PC-9 (cell line): ENCODE measurements at regions of chr16 and their contacts with region 1.

Region 1: GRCh38 chr16:22386976-22387375 is 12.6 kb upstream of the CDR2 start:
- DNase-seq: peak; percentile 25 to 92
- H3K4me3 ChIP-seq: no peak overlapping the region
- H3K27ac ChIP-seq: peak overlapping the region; percentile 64
- H3K4me1 ChIP-seq: peaks cover 41% of the 10 kb centered on the region
- H3K27me3 ChIP-seq: no peaks in the 10 kb centered on the region
- CTCF ChIP-seq: no peak

Region 2: GRCh38 chr16:22374311-22375116 is 12.5 kb before region 1 on chr16 and contains the start of gene CDR2:
- CTCF ChIA-PET with region 1: no interaction called
- POLR2A ChIA-PET with region 1: interaction called, 15 read pairs
- intact Hi-C with region 1: no loop called
- DNase-seq: peak; percentile 91 to 99
- H3K4me3 ChIP-seq: peak within 1 kb of the TSS; percentile 95
- H3K27ac ChIP-seq: peak within 1 kb of the TSS; percentile 45; the same call in 1 of the 2 replicates
- H3K4me1 ChIP-seq: peaks cover 39% of the 10 kb centered on the region
- H3K27me3 ChIP-seq: no peaks in the 10 kb centered on the region
- CTCF ChIP-seq: no peak
- total RNA-seq, gene CDR2: 29.3 and 34.0 TPM in 2 replicates

Region 3: GRCh38 chr16:22417019-22417418 is 30.0 kb after region 1 on chr16:
- CTCF ChIA-PET with region 1: no interaction called
- POLR2A ChIA-PET with region 1: no interaction called
- intact Hi-C with region 1: no loop called
- DNase-seq: no peak
- H3K4me3 ChIP-seq: no peak overlapping the region
- H3K27ac ChIP-seq: no peak overlapping the region
- H3K4me1 ChIP-seq: no peaks in the 10 kb centered on the region
- H3K27me3 ChIP-seq: no peaks in the 10 kb centered on the region
- CTCF ChIP-seq: no peak